ENCODE measurements at regions of chr7 and their contacts with region 1.

Region 1: GRCh38 chr7:54299426-54299825 is 242.7 kb upstream of the VSTM2A start:
- DNase-seq: no peak
- ATAC-seq: no peak
- H3K4me3 ChIP-seq: no peak overlapping the region
- H3K27ac ChIP-seq: no peak overlapping the region
- H3K4me1 ChIP-seq: no peaks in the 10 kb centered on the region
- H3K27me3 ChIP-seq: no peaks in the 10 kb centered on the region
- CTCF ChIP-seq: no peak
- POLR2A ChIP-seq: no peak

Region 2: GRCh38 chr7:54201501-54201900 is 97.9 kb before region 1 on chr7:
- intact Hi-C with region 1: loop called in 1 of 10 experiments (anchors 10 kb)
- DNase-seq: no peak
- ATAC-seq: no peak
- H3K4me3 ChIP-seq: no peak overlapping the region
- H3K27ac ChIP-seq: no peak overlapping the region
- H3K4me1 ChIP-seq: no peaks in the 10 kb centered on the region
- H3K27me3 ChIP-seq: no peaks in the 10 kb centered on the region
- CTCF ChIP-seq: no peak
- POLR2A ChIP-seq: no peak

Region 3: DNA sequence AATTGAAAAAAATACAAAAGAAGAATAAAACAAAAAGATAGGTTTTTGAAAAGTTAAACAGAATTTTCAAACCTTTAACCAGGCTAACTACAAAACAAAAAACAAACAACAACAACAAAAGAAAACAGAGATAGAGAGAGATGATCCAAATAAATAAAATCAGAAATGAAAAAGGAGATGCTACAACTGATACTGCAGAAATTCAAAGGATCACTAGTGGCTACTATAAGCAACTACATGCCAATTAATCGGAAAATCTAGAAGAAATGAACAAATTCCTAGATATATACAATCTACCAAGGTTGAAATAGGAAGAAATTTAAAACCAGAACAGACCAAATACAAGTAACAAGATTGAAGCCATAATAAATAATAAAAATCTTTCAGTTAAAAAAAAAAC is 84.0 kb before region 1 on chr7:
- intact Hi-C with region 1: loop called in 3 of 10 experiments (anchors 10 kb)
- DNase-seq: no peak
- ATAC-seq: no peak
- H3K4me3 ChIP-seq: no peak overlapping the region
- H3K27ac ChIP-seq: no peak overlapping the region
- H3K4me1 ChIP-seq: no peaks in the 10 kb centered on the region
- H3K27me3 ChIP-seq: no peaks in the 10 kb centered on the region
- CTCF ChIP-seq: no peak
- POLR2A ChIP-seq: no peak

Measured in heart left ventricle (tissue), 16 donors.